Psoas muscle (tissue), 8 donors: ENCODE measurements at regions of chr11 and their contacts with region 1.

Region 1: GRCh38 chr11:110086892-110087309 is 6.3 kb upstream of the ZC3H12C start:
- DNase-seq: no peak
- ATAC-seq: no peak
- H3K4me3 ChIP-seq: no peak overlapping the region
- H3K27ac ChIP-seq: no peak overlapping the region
- H3K4me1 ChIP-seq: peaks cover 3% of the 10 kb centered on the region
- H3K27me3 ChIP-seq: no peaks in the 10 kb centered on the region
- CTCF ChIP-seq: no peak

Region 2: DNA sequence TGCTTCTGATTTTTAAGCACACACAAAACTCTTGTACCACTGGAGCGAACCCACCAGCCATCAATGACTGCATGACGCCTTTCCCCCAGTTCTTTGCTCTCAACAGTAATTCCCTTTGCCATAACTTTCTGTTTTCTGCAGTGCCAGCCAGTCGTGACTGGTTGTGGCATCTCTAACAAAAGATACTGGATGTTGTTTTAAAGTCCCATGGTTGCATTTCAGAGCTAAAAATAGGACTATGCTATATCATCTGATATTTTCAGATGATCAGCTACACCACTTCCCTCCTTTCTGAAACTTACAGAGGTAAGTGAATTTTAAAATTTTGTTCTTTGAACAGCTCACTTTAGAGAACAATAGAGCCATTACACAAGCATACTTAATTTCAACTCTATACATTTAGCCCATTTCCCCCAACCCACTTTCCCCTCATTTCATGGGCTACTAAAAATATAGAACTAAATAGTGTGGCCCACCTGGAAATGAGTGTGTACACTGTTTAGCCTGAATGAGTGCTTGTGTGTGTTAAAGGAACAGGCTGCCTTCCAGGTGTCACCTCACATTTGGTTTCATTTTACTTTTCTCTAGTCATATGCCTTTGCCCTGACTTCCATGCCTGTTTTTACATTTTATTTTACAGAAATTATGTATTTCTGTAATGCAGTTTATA is 130.6 kb before region 1 on chr11:
- intact Hi-C with region 1: loop called in 1 of 2 experiments (anchors 5 kb)
- DNase-seq: no peak
- ATAC-seq: no peak
- H3K4me3 ChIP-seq: no peak overlapping the region
- H3K27ac ChIP-seq: no peak overlapping the region
- H3K4me1 ChIP-seq: peaks cover 8% of the 10 kb centered on the region
- H3K27me3 ChIP-seq: no peaks in the 10 kb centered on the region
- CTCF ChIP-seq: no peak

Region 3: DNA sequence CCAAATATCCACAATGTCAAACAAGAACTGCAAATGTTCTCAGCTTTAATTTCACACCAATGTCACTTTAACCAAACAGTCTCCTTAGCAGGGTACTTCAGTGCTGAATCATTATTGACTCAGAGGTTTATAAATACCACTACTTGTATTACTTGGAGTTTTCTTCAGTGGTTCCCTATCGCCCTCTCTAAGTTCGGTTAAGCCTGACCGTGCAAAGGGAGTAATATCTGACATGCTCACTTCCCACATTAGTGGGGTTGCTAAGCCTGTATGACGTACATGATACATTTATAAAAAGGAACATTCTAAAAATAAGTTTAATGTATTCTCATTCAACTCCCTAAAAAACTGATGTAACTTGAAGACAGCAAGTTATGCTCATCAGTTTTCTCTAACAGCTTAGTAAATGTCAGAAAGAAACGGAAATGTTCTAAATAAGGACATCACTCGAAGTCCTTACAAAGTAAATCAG is 86.8 kb before region 1 on chr11:
- intact Hi-C with region 1: loop called (anchors 2 to 10 kb)
- DNase-seq: no peak
- ATAC-seq: peak; percentile 98 to 99 (median 98)
- H3K4me3 ChIP-seq: no peak overlapping the region
- H3K27ac ChIP-seq: peak overlapping the region; percentile 77
- H3K4me1 ChIP-seq: peaks cover 20% of the 10 kb centered on the region
- H3K27me3 ChIP-seq: no peaks in the 10 kb centered on the region
- CTCF ChIP-seq: no peak

Region 4: DNA sequence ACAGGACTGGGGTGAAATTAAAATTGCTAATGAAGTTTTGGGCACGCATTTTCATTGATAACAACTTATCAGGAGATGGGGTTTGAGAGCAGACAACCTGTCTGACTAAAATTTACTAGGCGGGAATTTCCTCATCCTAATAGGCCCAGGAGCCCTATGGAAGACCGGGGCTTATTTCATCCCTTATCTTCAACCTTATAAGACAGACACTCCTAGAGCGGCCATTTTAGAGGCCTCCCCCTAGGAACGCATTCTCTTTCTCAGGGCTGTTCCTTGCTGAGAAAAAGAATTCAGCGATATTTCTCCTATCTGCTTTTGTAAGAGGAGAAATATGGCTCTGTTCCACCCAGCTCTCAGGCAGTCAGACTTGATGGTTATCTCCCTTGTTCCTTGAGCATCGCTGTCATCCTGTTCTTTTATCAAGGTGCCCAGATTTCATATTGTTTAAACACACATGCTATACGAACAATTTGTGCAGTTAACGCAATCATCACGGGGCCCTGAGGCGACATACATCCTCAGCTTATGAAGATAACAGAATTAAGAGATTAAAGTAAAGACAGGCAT is 33.0 kb before region 1 on chr11:
- intact Hi-C with region 1: no loop called
- DNase-seq: no peak
- ATAC-seq: no peak
- H3K4me3 ChIP-seq: no peak overlapping the region
- H3K27ac ChIP-seq: no peak overlapping the region
- H3K4me1 ChIP-seq: no peaks in the 10 kb centered on the region
- H3K27me3 ChIP-seq: no peaks in the 10 kb centered on the region
- CTCF ChIP-seq: no peak

Region 5: GRCh38 chr11:110069158-110069737 is 17.7 kb before region 1 on chr11:
- intact Hi-C with region 1: loop called in 1 of 2 experiments (anchors 2 kb)
- DNase-seq: peak; percentile 64 to 86
- ATAC-seq: peak; percentile 89 to 96 (median 93)
- H3K4me3 ChIP-seq: no peak overlapping the region
- H3K27ac ChIP-seq: peak overlapping the region; percentile 80
- H3K4me1 ChIP-seq: peaks cover 19% of the 10 kb centered on the region
- H3K27me3 ChIP-seq: no peaks in the 10 kb centered on the region
- CTCF ChIP-seq: no peak

Region 6: GRCh38 chr11:110434952-110435779 is 348.3 kb after region 1 on chr11:
- intact Hi-C with region 1: no loop called
- DNase-seq: no peak
- ATAC-seq: peak in 3 of 4 donors; percentile 44 to 64 (median 46)
- H3K4me3 ChIP-seq: peak overlapping the region; percentile 2
- H3K27ac ChIP-seq: peak overlapping the region; percentile 64
- H3K4me1 ChIP-seq: peaks cover 54% of the 10 kb centered on the region
- H3K27me3 ChIP-seq: no peaks in the 10 kb centered on the region
- CTCF ChIP-seq: no peak